ENCODE measurements at regions of chr22 and their contacts with region 1.

Region 1: GRCh38 chr22:20507253-20508066 is at the start of gene MED15:
- DNase-seq: peak; percentile 99 to 100 (median 100)
- ATAC-seq: peak; percentile 93
- H3K4me3 ChIP-seq: peak within 1 kb of the TSS; percentile 53
- H3K27ac ChIP-seq: peak within 1 kb of the TSS; percentile 82
- H3K4me1 ChIP-seq: peaks cover 45 to 47% of the 10 kb centered on the region in 2 experiments
- H3K27me3 ChIP-seq: no peaks in the 10 kb centered on the region
- CTCF ChIP-seq: peak in 2 of 3 experiments; percentile 6 to 23; a peak in 3 of 6 replicates
- EP300 ChIP-seq: peak; percentile 82
- POLR2A ChIP-seq: no peak
- RAD21 ChIP-seq: peak in 1 of 2 experiments; percentile 40; a peak in 2 of 4 replicates
- polyA plus RNA-seq, gene MED15: 4.0 to 5.2 TPM

Region 2: GRCh38 chr22:20490183-20490940 is 17.1 kb before region 1 on chr22:
- CTCF ChIA-PET with region 1: no interaction called
- POLR2A ChIA-PET with region 1: interaction called, 21 read pairs
- in situ Hi-C with region 1: no loop called
- intact Hi-C with region 1: no loop called
- DNase-seq: no peak
- ATAC-seq: no peak
- H3K4me3 ChIP-seq: no peak overlapping the region
- H3K27ac ChIP-seq: no peak overlapping the region
- H3K4me1 ChIP-seq: peaks cover 11 to 26% of the 10 kb centered on the region in 2 experiments
- H3K27me3 ChIP-seq: no peaks in the 10 kb centered on the region
- CTCF ChIP-seq: no peak
- EP300 ChIP-seq: no peak
- POLR2A ChIP-seq: no peak
- RAD21 ChIP-seq: no peak

Region 3: DNA sequence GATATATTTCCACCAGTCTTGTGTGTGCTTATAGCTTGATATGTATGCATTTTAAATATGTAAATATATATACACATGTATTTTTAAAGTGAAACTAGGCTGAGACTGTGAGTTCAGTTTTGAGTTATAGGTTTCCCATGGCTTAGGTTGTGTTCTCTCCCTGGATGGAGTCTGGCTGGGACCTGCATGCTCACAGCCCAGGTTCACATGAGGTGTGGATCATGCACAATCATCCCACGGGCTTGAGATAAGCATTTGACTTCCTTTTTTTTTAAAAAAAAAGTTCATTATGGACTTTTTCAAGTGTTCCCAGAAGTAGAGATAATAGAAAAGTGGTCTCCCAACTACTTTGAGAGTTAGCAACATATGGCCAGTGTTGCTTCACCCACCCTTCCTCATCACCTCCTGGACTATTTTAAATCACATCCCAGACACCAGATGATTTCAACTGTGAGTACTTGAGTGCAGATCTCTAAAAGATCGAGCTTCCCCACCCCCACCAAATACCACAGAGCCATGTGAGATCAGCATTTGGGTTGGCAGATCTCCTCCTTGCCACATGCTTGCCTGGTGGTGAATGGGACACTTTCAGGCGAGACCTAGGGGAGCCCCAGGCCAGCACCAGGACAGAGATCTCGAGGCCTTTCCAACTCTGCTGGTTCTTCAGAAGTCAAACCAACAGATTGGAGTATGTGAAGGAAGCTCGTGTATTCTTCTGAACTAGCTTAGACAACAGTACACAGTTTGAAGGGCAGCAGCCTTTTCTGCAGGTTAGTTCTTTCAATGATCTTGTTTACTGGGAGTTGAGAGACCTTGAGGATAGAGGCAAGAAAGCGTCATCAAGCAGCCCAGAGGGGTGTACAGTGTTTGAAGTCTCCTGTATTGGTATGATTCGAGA is 15.9 kb after region 1 on chr22:
- CTCF ChIA-PET with region 1: no interaction called
- POLR2A ChIA-PET with region 1: interaction called, 1,693 read pairs
- in situ Hi-C with region 1: no loop called
- intact Hi-C with region 1: loop called (anchors 1 kb)
- DNase-seq: peak; percentile 76 to 92 (median 80)
- ATAC-seq: peak; percentile 78
- H3K4me3 ChIP-seq: no peak overlapping the region
- H3K27ac ChIP-seq: peak overlapping the region; percentile 43
- H3K4me1 ChIP-seq: peaks cover 43 to 49% of the 10 kb centered on the region in 2 experiments
- H3K27me3 ChIP-seq: no peaks in the 10 kb centered on the region
- CTCF ChIP-seq: no peak; a peak in 1 of 6 replicates
- EP300 ChIP-seq: peak; percentile 95
- POLR2A ChIP-seq: no peak
- RAD21 ChIP-seq: peak in 1 of 2 experiments; percentile 39; a peak in 1 of 4 replicates

Region 4: GRCh38 chr22:20568989-20569769 is 61.7 kb after region 1 on chr22:
- CTCF ChIA-PET with region 1: interaction called, 11 read pairs
- POLR2A ChIA-PET with region 1: interaction called, 1,693 read pairs
- in situ Hi-C with region 1: no loop called
- intact Hi-C with region 1: no loop called
- DNase-seq: no peak
- ATAC-seq: no peak
- H3K4me3 ChIP-seq: no peak overlapping the region
- H3K27ac ChIP-seq: no peak overlapping the region
- H3K4me1 ChIP-seq: peaks cover under 1 to 9% of the 10 kb centered on the region in 2 experiments; a peak in 3 of 5 replicates
- H3K27me3 ChIP-seq: no peaks in the 10 kb centered on the region
- CTCF ChIP-seq: no peak; a peak in 1 of 6 replicates
- EP300 ChIP-seq: no peak
- POLR2A ChIP-seq: no peak
- RAD21 ChIP-seq: no peak